GM10248 (cell line): ENCODE measurements at regions of chr9 and their contacts with region 1.

Region 1: GRCh38 chr9:6584881-6585597 is 60.5 kb downstream of the GLDC start:
- DNase-seq: no peak
- CTCF ChIP-seq: peak; percentile 53

Region 2: GRCh38 chr9:6598249-6598725 is 13.2 kb after region 1 on chr9:
- CTCF ChIA-PET with region 1: interaction called, 13 read pairs
- POLR2A ChIA-PET with region 1: no interaction called
- DNase-seq: peak; percentile 86
- CTCF ChIP-seq: no peak

Region 3: DNA sequence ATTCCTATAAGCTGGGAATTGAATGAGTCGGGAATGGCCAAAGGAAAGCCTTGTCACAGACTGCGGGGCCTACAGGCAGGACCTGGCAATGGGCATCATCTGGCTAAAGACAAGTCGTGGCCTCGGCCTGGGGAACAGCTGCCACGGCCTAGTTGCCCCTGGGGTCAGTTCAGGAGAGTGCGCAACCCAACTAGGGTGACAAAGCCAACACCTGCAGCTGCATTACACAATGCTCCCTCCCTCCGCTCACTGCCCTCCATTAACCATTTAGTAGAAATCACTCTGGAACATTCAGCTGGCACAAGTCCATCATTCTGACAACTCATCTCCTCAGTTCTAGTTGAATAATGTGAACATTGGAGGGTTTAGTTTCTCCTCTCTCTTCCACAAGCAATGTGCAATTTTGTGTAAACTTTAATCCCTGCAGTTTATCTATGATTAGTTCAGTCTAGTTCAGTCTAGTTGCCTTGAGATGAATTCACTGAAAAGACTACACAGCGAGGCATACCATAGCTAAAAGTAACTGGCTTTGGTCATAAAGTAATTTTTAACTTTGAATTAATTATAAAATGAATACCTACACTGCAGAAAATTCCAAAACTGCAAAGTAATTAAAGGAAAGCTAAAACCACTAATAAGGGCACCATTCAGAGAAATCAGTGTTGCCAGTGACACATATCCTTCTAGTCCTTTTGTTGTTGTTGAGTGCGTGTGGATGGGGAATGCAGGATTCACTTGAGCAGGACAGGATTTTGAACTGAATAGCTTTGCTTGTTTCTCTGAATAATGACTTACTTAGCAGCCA is 55.4 kb after region 1 on chr9:
- CTCF ChIA-PET with region 1: interaction called, 14 read pairs
- POLR2A ChIA-PET with region 1: no interaction called
- DNase-seq: no peak
- CTCF ChIP-seq: no peak

Region 4: GRCh38 chr9:6667633-6668280 is 82.7 kb after region 1 on chr9:
- CTCF ChIA-PET with region 1: interaction called, 25 read pairs
- POLR2A ChIA-PET with region 1: no interaction called
- DNase-seq: peak; percentile 52
- CTCF ChIP-seq: peak; percentile 49

Region 5: DNA sequence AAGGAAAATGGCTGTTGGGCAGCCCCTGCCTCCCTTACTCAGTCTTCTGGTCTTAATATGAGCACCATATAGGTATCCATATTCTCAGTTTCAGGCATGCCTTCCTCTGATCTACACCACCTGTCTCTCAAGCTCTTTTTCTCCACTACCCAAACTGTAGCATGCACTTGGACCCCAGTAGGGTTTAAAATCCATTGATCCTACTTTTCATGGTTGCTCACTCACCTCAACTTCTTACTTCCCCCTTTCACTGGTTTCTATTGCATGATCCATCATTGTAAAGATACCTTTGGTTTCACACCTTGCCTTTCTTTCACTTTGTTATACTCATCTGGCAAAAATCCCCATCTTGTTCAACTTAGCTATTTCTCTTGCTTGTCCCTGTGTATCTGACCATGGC is 332.1 kb after region 1 on chr9:
- CTCF ChIA-PET with region 1: no interaction called
- POLR2A ChIA-PET with region 1: no interaction called
- DNase-seq: peak; percentile 33
- CTCF ChIP-seq: no peak